Activated CD8-positive, alpha-beta T cell treated with anti-CD3 and anti-CD28 coated beads, Interleukin-2, amount 10 ng/mL, durations not matched to agents 7 days and 5 days (primary cell): ENCODE measurements at regions of chr7 and their contacts with region 1.

Region 1: DNA sequence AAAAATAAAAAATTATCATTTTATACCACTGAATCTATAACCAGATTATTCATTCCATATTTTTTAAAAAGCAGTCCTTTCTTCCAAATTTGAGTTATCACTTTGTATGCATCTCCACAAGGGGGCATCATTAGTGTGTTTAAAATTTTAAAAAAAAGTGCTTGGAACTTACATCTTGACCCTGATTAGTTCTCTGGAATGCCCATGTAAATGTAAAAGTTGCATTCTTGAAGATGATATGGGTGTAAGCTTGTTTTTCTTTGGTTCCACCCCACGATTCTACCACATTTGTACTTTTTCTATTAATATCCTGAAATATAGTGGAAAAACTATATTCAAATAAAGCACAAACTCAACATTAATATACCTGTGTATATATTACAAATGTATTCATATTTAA is 144.9 kb downstream of the ELAPOR2 start:
- DNase-seq: no peak
- ATAC-seq: no peak
- H3K4me3 Mint-ChIP-seq: no peak overlapping the region
- H3K27ac Mint-ChIP-seq: no peak overlapping the region
- H3K4me1 Mint-ChIP-seq: no peaks in the 10 kb centered on the region
- H3K27me3 Mint-ChIP-seq: peaks cover 7% of the 10 kb centered on the region

Region 2: GRCh38 chr7:86366946-86367345 is 547.6 kb before region 1 on chr7:
- CTCF ChIA-PET with region 1: no interaction called
- POLR2A ChIA-PET with region 1: no interaction called
- DNase-seq: no peak
- ATAC-seq: no peak
- H3K4me3 Mint-ChIP-seq: no peak overlapping the region
- H3K27ac Mint-ChIP-seq: no peak overlapping the region
- H3K4me1 Mint-ChIP-seq: no peaks in the 10 kb centered on the region
- H3K27me3 Mint-ChIP-seq: no peaks in the 10 kb centered on the region

Region 3: DNA sequence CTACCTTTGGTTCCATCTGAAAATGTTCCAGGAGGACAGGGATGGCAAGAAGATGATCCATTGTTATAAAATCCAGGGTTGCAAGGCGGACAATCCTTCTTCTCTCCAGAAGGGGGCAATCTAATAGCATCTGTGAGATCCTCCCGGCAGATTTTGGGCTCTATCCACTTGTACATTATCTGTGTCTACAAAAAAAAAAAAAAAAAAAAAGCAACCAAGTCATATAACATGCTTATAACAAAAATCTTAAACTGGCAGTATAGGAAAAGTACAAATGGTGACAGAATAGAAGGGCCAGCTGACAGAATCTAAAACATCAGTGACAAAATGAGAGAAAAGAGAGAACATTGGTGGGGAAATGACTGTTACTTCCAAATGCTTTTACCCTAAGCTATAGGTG is 12.2 kb after region 1 on chr7:
- CTCF ChIA-PET with region 1: interaction called, 11 read pairs
- POLR2A ChIA-PET with region 1: no interaction called
- DNase-seq: peak; percentile 37
- ATAC-seq: no peak
- H3K4me3 Mint-ChIP-seq: no peak overlapping the region
- H3K27ac Mint-ChIP-seq: no peak overlapping the region
- H3K4me1 Mint-ChIP-seq: no peaks in the 10 kb centered on the region
- H3K27me3 Mint-ChIP-seq: peaks cover 13% of the 10 kb centered on the region